Mammary epithelial cell (primary cell): ENCODE measurements at regions of chr4 and their contacts with region 1.

Region 1: DNA sequence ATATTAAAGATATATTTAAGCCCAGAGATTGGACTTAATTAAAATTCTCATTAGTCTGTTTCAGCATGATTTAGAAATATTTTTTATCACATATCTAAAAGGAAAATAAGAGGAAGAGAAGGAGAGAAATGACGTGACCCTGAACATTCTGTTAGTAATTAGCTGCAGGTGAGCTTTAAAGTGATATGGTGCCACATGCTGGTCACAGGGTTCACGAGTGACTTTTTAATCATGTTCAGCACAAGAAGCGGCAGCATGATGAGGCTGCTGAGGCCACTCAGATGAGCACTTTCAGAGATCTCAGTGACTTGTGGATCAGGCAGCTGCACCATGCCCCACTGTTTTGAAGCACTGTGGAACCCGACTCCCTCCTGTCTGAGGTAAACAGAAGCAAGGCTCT is 37.9 kb upstream of the NPY2R start:
- DNase-seq: no peak
- H3K4me3 ChIP-seq: no peak overlapping the region
- H3K27ac ChIP-seq: no peak overlapping the region
- H3K4me1 ChIP-seq: no peaks in the 10 kb centered on the region
- H3K27me3 ChIP-seq: peaks cover 3% of the 10 kb centered on the region
- CTCF ChIP-seq: no peak

Region 2: DNA sequence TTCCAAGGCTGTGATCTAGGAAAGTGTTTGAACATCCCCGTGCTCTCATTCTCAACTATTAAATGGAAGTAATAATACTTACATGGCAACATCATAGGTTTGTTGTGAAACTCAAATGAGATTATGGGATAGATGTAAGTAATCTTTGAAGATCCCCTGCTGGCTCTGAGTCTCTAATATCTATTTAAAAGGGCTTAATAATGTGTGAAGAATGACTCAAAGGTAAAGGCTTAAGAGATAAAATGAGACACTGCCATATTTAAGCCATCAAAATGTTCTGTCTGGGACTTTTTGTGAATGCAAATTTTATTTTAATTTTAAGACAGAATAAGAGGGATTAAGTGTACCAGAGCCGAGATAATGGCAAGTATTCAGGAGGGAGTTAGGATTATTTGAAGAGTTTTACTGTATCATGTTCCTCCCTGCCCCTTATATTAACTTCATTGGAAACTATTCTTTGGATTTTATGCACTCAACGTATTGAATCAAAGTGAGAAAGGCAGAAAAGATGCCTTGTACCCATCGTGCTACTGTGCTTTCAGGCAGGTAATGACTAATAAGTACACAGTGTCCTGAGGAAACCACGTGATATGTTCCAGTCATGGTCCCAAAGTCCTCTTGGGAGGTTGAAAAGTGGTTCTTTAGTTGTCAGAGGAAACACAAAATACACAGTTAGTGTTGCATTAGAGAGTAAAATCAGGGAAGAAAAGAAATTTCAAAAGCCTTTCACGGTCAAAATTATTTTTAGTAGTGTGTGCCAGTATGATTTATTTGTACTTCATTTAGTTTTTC is 197.1 kb before region 1 on chr4:
- CTCF ChIA-PET with region 1: interaction called, 12 read pairs
- dilution Hi-C with region 1: no loop called
- in situ Hi-C with region 1: no loop called
- intact Hi-C with region 1: no loop called
- DNase-seq: peak; percentile 19
- H3K4me3 ChIP-seq: no peak overlapping the region
- H3K27ac ChIP-seq: no peak overlapping the region
- H3K4me1 ChIP-seq: peaks cover 6% of the 10 kb centered on the region
- H3K27me3 ChIP-seq: no peaks in the 10 kb centered on the region
- CTCF ChIP-seq: no peak

Region 3: DNA sequence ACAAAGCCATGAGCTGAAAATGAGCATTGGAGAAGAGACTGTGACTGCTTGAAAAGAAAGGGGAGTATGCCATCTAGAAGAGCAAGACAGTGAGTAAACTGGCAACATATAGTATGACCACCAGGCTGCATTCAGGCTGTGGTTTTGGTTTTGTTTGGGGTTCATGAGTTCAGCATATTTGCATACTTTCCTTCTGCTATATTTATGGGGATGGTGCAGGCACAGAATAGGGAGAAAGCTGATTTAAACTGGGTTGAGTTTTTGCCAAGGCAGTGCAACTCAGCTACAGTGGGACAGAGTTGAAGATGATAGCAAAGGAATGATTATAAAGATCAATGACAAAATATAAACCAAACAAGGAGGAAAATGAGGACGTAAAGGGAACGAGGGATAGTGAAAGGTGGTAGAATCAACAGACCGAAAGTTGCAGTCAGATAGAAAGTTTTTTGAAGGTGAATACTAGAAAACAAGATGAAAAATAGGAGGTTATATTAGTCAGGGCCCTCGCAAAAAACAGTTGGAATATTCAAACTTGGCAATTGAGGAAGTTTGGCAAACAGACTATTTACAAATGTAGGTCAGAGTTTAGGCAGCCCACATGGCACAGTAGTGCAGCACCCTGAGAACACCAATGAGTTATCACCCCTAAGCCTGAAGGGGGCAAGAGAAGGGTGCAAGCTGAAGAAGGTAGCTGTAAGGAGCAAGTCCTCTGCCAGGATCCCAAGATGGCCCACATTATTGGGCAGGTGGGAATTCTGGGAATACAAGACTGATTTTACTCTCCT is 321.0 kb after region 1 on chr4:
- CTCF ChIA-PET with region 1: no interaction called
- dilution Hi-C with region 1: no loop called
- in situ Hi-C with region 1: no loop called
- intact Hi-C with region 1: no loop called
- DNase-seq: no peak
- H3K4me3 ChIP-seq: no peak overlapping the region
- H3K27ac ChIP-seq: no peak overlapping the region
- H3K4me1 ChIP-seq: no peaks in the 10 kb centered on the region
- H3K27me3 ChIP-seq: no peaks in the 10 kb centered on the region
- CTCF ChIP-seq: no peak